PC-9 (cell line): ENCODE measurements at regions of chr20 and their contacts with region 1.

Region 1: DNA sequence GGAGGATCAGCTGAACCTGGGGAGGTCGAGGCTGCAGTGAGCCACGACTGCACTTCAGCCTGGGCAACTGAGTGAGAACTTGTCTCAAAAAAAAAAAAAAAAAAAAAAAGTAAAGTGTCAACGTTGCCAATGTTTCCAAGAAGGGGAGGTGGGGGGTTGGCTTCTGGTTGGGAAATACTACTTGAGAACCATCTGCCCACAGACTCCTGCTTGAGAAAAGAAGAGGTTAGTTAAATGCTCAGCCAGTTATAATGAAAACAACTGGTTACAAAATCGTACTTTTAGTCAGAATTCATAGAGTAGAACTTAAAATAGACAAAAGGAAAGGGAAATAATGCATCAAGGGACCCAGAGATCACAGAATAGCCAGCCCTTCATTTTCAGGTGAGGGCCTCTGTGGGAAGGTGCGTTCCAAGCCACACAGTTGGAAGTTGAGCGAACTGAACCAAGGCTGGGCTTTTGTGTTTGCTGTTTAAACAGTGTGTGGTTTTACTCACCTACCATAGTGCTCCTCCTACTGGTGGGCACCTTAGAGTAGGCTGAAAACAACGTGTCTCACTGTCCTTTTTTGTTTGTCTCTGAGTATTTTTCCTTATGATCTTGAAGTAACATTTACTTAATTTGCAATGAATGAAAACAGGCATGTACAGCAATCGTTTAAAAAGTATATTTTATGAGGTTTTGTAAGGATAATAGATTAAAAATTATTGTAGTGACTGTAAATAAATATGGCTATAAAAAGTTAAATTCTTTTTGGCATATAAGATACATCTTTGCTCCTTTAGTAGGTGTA is 200.7 kb downstream of the BCAS1 start:
- DNase-seq: peak; percentile 64 to 76
- H3K4me3 ChIP-seq: no peak overlapping the region
- H3K27ac ChIP-seq: peak overlapping the region; percentile 77
- H3K4me1 ChIP-seq: peaks cover 68% of the 10 kb centered on the region
- H3K27me3 ChIP-seq: no peaks in the 10 kb centered on the region
- CTCF ChIP-seq: peak; percentile 90

Region 2: GRCh38 chr20:53623454-53624211 is 246.0 kb before region 1 on chr20:
- CTCF ChIA-PET with region 1: interaction called, 3 read pairs
- POLR2A ChIA-PET with region 1: interaction called, 6 read pairs
- intact Hi-C with region 1: loop called (anchors 1 kb)
- DNase-seq: peak; percentile 62 to 69
- H3K4me3 ChIP-seq: peak overlapping the region; percentile 58
- H3K27ac ChIP-seq: peak overlapping the region; percentile 98
- H3K4me1 ChIP-seq: peaks cover 57% of the 10 kb centered on the region
- H3K27me3 ChIP-seq: no peaks in the 10 kb centered on the region
- CTCF ChIP-seq: no peak

Region 3: DNA sequence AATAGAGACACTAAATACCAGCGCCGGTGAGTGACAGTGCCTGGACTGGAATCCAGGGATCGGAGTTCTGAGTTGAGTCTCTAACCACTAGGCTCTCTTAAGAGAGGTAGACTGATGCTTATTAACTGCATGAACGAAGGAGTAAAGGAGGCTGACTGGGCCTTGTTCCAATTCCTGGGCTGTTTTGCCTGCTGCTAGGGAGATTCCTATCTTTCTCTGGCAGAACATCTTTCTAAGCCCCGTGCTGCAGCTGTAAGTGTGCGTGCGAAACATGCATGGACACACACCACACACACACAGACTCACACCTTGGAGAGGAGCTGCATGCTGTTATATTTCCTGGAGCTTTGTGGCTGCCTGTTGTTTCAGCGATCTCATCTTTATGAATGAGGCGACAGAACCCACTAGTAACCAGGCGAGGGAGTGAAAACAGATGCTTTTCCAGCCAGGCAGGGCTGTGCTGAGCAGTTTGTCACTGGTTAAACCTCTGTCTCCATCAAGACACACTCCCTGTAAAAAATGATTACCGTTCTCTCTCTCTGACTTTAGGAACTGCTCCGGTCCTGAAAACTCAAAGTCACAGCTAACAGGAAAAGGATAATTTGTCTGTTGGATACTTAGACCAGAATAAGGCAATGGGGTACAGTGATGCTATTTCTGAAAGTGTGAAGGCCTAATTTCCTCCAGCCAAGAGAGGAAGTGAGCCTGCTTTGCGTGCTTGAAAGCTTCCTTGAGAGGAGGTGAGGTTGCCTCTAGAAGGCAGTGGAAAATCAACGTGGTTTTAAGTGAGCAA is 118.6 kb before region 1 on chr20:
- CTCF ChIA-PET with region 1: no interaction called
- POLR2A ChIA-PET with region 1: interaction called, 3 read pairs
- intact Hi-C with region 1: loop called (anchors 2 kb)
- DNase-seq: no peak
- H3K4me3 ChIP-seq: no peak overlapping the region
- H3K27ac ChIP-seq: peak overlapping the region; percentile 98
- H3K4me1 ChIP-seq: peaks cover 83% of the 10 kb centered on the region
- H3K27me3 ChIP-seq: no peaks in the 10 kb centered on the region
- CTCF ChIP-seq: no peak

Region 4: DNA sequence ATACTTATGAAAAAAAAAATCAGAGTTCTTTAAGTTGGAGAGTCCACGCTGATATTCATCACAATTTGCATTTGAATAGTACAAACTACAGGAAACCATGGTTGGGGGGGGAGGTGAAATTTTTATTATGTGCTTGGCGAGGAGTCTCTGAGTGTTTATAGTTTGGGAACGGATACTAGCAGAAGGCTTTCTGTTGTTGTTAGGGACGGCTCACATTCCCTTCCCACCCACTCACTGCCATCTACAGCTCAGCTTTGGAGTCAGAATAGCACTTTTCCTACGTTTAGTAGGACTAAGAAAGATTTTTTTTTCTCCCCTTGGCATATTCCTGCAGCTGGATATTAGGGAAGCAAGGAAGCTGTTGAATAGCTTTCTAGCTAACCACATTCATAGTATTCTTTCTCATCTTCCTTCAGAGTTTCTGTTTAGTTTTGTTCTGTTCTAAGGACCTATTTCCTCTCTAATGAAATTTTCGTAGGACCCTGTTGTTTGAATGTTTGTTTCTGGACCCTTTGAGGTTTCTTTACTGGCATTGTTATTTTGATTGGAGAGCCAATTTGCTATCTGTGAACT is 40.9 kb before region 1 on chr20:
- CTCF ChIA-PET with region 1: no interaction called
- POLR2A ChIA-PET with region 1: no interaction called
- intact Hi-C with region 1: loop called (anchors 1 kb)
- DNase-seq: peak in 1 of 2 experiments; percentile 49
- H3K4me3 ChIP-seq: peak overlapping the region; percentile 56
- H3K27ac ChIP-seq: peak overlapping the region; percentile 100
- H3K4me1 ChIP-seq: peaks cover 55% of the 10 kb centered on the region
- H3K27me3 ChIP-seq: no peaks in the 10 kb centered on the region
- CTCF ChIP-seq: peak; percentile 46

Region 5: DNA sequence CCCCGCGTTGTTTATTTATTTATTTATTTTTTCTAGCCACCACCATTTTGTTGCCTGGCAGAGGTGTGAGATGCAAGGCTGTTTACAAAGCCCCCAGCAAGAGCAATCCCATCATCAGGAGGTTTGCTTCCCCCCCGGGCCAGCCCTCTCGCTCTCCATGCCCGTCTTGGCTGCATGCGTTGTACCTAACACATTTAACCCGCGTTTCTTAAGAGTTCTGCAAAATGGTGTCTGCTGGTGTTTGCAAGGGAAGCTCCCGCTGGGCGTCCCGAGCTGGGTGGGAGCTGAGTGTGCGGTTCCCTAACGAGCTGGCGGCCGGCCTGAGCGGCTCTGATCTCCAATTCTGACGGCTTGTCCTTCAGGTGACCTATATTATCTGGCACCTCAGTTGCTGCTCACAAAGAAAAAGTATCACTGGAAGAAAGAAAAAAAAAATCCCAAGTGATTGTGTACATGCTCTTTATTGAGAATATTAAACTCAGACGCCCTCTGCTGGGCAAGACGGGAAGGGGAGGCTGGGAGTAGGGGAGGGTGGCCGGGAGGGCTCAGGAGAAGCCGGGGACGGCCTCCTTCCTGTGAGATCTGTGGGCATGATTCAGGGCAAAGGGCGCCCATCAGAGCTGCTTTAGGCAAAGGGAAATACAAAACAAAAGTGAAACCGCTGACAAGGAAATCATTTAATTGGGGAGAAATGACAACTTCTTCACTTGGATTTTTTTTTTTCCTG is 45.9 kb after region 1 on chr20:
- CTCF ChIA-PET with region 1: interaction called, 10 read pairs
- POLR2A ChIA-PET with region 1: interaction called, 6 read pairs
- intact Hi-C with region 1: loop called (anchors 1 kb)
- DNase-seq: peak; percentile 95 to 98
- H3K4me3 ChIP-seq: peak overlapping the region; percentile 61
- H3K27ac ChIP-seq: peak overlapping the region; percentile 93
- H3K4me1 ChIP-seq: peaks cover 47% of the 10 kb centered on the region
- H3K27me3 ChIP-seq: no peaks in the 10 kb centered on the region
- CTCF ChIP-seq: peak; percentile 97